HepG2 (cell line): ENCODE measurements at regions of chr3 and their contacts with region 1.

Region 1: GRCh38 chr3:88003115-88003755 is 55.6 kb downstream of the CGGBP1 start:
- DNase-seq: peak; percentile 32
- ATAC-seq: peak; percentile 52; the same call in 2 of the 3 replicates
- H3K4me3 ChIP-seq: no peak overlapping the region
- H3K27ac ChIP-seq: no peak overlapping the region
- H3K4me1 ChIP-seq: no peaks in the 10 kb centered on the region
- H3K27me3 ChIP-seq: no peaks in the 10 kb centered on the region; a peak in 1 of 5 replicates
- CTCF ChIP-seq: peak; percentile 70
- EP300 ChIP-seq: no peak
- POLR2A ChIP-seq: no peak
- RAD21 ChIP-seq: 0 out of 2 replicates have a peak, but pooled peaks have one; percentile 32

Region 2: DNA sequence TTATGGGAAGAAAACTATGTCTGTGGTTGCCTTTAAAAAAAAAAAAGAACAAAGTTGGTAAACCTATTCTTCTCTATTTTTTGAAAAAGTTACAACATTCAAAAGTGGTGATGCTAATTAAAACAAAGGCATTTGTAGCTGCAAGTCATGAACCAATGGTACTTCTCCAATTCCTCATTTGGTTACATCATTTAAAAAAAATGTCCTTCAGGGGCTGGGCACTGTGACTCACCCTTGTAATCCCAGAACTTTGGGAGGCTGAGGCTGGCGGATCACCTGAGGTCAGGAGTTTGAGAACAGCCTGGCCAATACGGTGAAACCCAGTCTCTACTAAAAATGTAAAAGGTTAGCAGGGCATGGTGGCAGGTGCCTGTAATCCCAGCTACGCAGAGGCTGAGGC is 1586.9 kb before region 1 on chr3:
- CTCF ChIA-PET with region 1: no interaction called
- POLR2A ChIA-PET with region 1: no interaction called
- in situ Hi-C with region 1: no loop called
- intact Hi-C with region 1: no loop called
- DNase-seq: no peak
- ATAC-seq: no peak
- H3K4me3 ChIP-seq: no peak overlapping the region
- H3K27ac ChIP-seq: no peak overlapping the region
- H3K4me1 ChIP-seq: no peaks in the 10 kb centered on the region
- H3K27me3 ChIP-seq: no peaks in the 10 kb centered on the region
- CTCF ChIP-seq: no peak
- EP300 ChIP-seq: no peak
- POLR2A ChIP-seq: no peak
- RAD21 ChIP-seq: no peak

Region 3: DNA sequence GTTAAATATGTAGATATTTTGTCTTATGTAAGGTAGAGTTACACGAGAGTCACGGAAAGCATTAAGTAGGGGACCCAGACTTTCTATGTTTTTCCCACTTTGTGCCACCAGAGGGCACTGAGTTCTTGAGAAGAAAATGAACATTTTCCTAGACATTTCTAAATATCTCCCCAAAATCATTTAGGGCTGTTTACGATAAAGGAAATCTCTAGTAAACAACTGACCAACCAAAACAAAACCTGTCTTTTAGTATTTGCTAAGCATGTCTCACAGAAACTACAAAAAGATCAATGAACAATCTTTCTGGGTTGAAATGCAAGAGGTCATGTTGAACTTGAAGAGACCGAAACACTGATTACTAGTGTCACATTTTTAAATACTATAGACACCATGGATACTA is 743.0 kb before region 1 on chr3:
- CTCF ChIA-PET with region 1: no interaction called
- POLR2A ChIA-PET with region 1: no interaction called
- in situ Hi-C with region 1: no loop called
- intact Hi-C with region 1: loop called (anchors 10 kb)
- DNase-seq: peak; percentile 39
- ATAC-seq: peak; percentile 44; the same call in 2 of the 3 replicates
- H3K4me3 ChIP-seq: no peak overlapping the region
- H3K27ac ChIP-seq: no peak overlapping the region
- H3K4me1 ChIP-seq: no peaks in the 10 kb centered on the region
- H3K27me3 ChIP-seq: no peaks in the 10 kb centered on the region
- CTCF ChIP-seq: peak; percentile 52
- EP300 ChIP-seq: no peak
- POLR2A ChIP-seq: no peak
- RAD21 ChIP-seq: no peak

Region 4: DNA sequence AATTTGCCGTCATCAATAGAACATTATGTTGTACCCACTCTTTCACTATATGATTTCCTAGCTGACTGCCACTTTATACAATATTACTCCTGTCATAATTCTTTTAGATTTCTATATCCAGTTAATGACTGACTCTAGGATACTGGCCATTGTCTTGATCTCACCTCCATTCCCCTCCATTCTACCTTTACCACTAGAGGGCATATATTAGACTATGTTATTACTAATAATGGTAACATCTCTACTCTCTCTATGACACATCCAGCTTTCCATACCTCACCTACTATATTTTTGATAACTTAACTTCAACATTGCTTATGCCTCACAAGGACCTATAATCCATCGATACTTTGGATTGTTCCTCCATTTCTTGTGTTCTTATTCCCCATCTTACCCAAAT is 695.4 kb before region 1 on chr3:
- CTCF ChIA-PET with region 1: no interaction called
- POLR2A ChIA-PET with region 1: no interaction called
- in situ Hi-C with region 1: loop called (anchors 25 kb)
- intact Hi-C with region 1: no loop called
- DNase-seq: no peak
- ATAC-seq: peak; percentile 68
- H3K4me3 ChIP-seq: no peak overlapping the region
- H3K27ac ChIP-seq: no peak overlapping the region
- H3K4me1 ChIP-seq: no peaks in the 10 kb centered on the region
- H3K27me3 ChIP-seq: no peaks in the 10 kb centered on the region; a peak in 1 of 5 replicates
- CTCF ChIP-seq: no peak
- EP300 ChIP-seq: no peak
- POLR2A ChIP-seq: no peak
- RAD21 ChIP-seq: no peak

Region 5: DNA sequence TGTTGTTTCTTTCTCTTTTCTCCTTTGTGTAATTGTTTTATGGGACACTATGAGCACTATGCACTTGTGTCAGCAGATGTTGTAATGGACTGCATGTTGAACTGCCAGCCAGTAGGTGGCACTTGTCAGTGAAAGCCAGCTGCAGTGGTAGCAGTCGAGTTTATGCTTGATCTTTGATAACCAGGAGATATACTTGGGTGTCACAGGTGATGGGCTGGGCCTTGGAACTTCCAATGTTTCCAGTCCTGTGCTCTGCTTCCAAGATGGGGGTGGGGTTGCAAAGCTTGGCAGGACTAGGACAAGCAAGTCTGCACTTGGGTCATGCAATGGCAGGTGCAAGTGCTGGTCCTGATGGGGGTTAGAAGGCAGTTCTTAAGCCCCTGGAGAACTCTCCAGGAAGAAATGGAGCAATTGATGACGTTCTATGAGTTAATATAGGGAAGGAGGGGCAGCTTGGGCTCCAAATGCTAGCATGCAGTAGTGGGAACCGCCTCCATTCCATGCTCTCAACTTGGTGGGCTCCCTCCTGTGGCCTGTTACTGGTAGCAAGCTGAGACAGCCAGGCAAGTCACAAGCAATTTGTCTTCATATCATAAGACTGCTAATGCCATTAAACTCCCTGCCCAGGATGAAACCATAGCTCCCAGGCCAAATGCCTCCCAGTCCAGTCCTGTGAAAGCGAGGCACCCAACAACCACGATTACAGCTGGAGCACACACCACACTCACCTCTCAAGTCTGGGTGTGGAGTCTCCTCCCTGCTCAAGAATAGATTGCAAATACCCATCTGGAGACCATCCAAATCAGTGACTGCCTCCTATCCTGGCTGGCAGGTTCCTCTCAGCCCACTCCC is 231.7 kb before region 1 on chr3:
- CTCF ChIA-PET with region 1: interaction called, 8 read pairs
- POLR2A ChIA-PET with region 1: no interaction called
- in situ Hi-C with region 1: loop called (anchors 10 kb)
- intact Hi-C with region 1: loop called (anchors 1 kb)
- DNase-seq: peak; percentile 35
- ATAC-seq: peak; percentile 97
- H3K4me3 ChIP-seq: no peak overlapping the region
- H3K27ac ChIP-seq: no peak overlapping the region
- H3K4me1 ChIP-seq: no peaks in the 10 kb centered on the region
- H3K27me3 ChIP-seq: no peaks in the 10 kb centered on the region
- CTCF ChIP-seq: peak; percentile 71
- EP300 ChIP-seq: no peak
- POLR2A ChIP-seq: no peak
- RAD21 ChIP-seq: peak; percentile 38; the same call in 1 of the 2 replicates

Region 6: GRCh38 chr3:87968668-87969067 is 34.6 kb before region 1 on chr3:
- CTCF ChIA-PET with region 1: no interaction called
- POLR2A ChIA-PET with region 1: no interaction called
- in situ Hi-C with region 1: no loop called
- intact Hi-C with region 1: no loop called
- DNase-seq: no peak
- ATAC-seq: no peak
- H3K4me3 ChIP-seq: no peak overlapping the region
- H3K27ac ChIP-seq: no peak overlapping the region
- H3K4me1 ChIP-seq: no peaks in the 10 kb centered on the region
- H3K27me3 ChIP-seq: no peaks in the 10 kb centered on the region; a peak in 1 of 5 replicates
- CTCF ChIP-seq: no peak
- EP300 ChIP-seq: no peak
- POLR2A ChIP-seq: no peak
- RAD21 ChIP-seq: no peak

Region 7: DNA sequence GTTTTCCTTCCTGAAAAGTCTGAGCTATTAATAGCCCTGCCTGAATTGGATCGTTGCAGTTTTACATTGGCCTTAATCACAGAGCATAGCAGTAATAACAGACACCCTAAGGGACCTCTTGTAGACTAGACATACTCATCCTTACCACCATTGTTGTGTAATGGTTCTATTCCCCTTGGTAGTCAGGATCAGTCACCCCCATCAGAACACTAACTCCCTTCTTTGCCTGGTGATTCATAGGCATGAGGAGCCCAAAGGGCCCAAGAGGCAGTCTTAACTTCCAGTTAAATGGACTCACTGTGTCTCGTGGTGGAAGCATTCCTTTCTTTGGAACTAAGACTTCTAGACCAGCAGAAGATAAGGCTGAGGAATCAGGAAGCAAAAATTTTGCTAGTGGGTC is 35.3 kb after region 1 on chr3:
- CTCF ChIA-PET with region 1: no interaction called
- POLR2A ChIA-PET with region 1: no interaction called
- in situ Hi-C with region 1: no loop called
- intact Hi-C with region 1: no loop called
- DNase-seq: no peak
- ATAC-seq: no peak
- H3K4me3 ChIP-seq: no peak overlapping the region
- H3K27ac ChIP-seq: no peak overlapping the region
- H3K4me1 ChIP-seq: no peaks in the 10 kb centered on the region
- H3K27me3 ChIP-seq: no peaks in the 10 kb centered on the region; a peak in 2 of 5 replicates
- CTCF ChIP-seq: no peak
- EP300 ChIP-seq: no peak
- POLR2A ChIP-seq: no peak
- RAD21 ChIP-seq: no peak

Region 8: DNA sequence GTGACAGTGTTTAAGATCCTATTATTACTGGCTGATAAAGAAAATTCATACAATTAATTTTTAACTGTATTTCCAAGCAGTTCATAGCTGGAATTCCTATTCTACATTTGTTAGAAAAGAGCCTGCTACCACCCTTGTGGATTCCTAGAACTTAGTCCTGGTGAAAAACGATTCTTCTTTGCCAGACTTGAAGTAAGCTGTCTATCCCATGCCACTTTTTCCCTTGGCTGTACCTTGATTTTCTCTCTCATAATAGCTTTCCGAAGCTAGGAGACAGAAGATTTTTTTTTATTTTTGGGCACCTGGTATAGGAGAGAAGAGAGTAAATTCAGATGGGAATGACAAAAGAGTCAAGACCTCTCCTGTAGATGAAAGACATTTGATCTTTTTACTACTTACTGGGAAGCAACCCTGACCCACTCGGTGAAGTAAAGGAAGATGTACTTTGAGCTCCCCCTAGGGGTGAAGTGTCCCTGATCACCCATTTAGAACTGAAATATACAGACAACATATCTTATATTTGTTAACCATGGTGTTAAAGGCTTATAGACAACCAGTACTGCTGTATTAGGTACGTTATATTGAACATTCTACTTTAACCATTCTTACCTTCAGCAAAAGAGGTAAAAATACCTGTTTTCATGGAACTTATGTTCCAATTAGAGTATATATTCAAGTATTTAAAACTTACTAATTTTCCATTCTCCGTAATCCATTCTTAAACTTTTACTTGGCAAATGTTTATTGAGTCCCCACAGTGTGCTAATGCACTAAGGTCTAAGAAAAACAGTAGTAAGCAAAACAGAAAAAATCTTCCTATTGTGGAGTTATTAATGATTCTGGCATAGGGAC is 110.3 kb after region 1 on chr3:
- CTCF ChIA-PET with region 1: interaction called, 3 read pairs
- POLR2A ChIA-PET with region 1: no interaction called
- in situ Hi-C with region 1: no loop called
- intact Hi-C with region 1: loop called (anchors 1 kb)
- DNase-seq: peak; percentile 60
- ATAC-seq: peak; percentile 96
- H3K4me3 ChIP-seq: no peak overlapping the region
- H3K27ac ChIP-seq: no peak overlapping the region
- H3K4me1 ChIP-seq: no peaks in the 10 kb centered on the region
- H3K27me3 ChIP-seq: no peaks in the 10 kb centered on the region
- CTCF ChIP-seq: peak; percentile 66
- EP300 ChIP-seq: no peak
- POLR2A ChIP-seq: no peak
- RAD21 ChIP-seq: no peak